Right ventricle myocardium inferior (tissue), 1 donor: ENCODE measurements at regions of chrX and their contacts with region 1.

Region 1: DNA sequence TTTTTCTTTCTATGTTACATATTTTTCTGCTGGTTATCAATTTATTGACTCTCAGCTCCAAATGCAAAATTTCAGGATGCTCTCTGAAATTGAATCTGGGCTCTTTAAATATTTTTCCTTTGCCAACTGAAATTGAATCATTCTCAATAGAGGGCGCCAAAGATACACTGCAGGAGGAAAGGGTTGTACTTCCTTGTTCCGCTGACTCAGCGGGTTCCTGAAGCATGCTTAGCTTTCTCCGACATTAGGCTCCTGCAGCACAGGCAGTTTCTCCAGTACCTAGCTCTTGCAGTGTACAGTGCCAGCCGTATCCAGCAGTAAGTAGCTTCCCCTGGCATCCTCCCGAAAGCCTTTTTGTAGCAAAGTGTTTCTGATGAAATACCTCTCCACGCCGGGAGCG is 28.8 kb upstream of the CFAP47 start:
- DNase-seq: no peak
- ATAC-seq: no peak

Region 2: GRCh38 chrX:35711281-35711680 is 179.4 kb before region 1 on chrX:
- intact Hi-C with region 1: no loop called
- DNase-seq: no peak
- ATAC-seq: no peak

Region 3: DNA sequence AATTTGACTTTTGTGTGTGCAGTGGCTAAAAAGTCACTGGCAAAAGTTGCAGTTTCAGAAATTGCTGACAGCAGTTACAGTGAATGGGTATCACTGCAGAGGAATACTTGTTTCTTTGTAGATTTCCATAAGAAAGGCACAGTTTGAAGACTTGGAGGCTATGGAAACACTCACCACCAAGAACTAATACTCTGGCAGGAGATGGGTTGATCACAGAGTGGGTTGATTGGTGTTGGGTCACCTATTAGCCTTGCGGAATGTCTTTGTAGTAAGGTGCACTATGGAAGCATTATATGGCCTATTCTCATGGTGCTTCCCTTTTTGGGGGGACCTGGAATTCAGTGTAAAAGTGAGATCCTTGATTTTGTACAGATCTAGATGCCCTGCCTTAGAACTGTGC is 531.7 kb after region 1 on chrX:
- intact Hi-C with region 1: no loop called
- DNase-seq: no peak
- ATAC-seq: no peak

Region 4: DNA sequence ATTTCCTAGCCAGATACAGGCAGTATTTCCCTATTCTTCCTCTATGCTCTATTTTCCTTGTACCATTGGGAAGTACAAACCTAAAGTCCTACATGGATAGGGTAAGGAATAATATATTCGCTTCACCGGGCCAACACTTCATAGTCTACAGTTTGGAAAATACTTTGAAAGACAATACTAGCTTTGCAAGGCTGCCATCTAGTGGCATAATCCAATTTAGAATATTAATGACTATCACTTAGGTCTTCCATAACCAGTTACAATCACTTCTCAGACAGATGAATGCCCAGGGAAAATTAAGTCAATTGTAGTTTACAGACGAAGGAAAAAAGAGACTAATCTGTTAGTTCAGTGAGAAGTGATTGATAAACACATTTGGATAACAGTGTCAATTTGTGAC is 976.4 kb after region 1 on chrX:
- intact Hi-C with region 1: loop called (anchors 10 kb)
- DNase-seq: no peak
- ATAC-seq: no peak